CD4-positive, alpha-beta memory T cell (primary cell): ENCODE measurements at regions of chr17 and their contacts with region 1.

Region 1: DNA sequence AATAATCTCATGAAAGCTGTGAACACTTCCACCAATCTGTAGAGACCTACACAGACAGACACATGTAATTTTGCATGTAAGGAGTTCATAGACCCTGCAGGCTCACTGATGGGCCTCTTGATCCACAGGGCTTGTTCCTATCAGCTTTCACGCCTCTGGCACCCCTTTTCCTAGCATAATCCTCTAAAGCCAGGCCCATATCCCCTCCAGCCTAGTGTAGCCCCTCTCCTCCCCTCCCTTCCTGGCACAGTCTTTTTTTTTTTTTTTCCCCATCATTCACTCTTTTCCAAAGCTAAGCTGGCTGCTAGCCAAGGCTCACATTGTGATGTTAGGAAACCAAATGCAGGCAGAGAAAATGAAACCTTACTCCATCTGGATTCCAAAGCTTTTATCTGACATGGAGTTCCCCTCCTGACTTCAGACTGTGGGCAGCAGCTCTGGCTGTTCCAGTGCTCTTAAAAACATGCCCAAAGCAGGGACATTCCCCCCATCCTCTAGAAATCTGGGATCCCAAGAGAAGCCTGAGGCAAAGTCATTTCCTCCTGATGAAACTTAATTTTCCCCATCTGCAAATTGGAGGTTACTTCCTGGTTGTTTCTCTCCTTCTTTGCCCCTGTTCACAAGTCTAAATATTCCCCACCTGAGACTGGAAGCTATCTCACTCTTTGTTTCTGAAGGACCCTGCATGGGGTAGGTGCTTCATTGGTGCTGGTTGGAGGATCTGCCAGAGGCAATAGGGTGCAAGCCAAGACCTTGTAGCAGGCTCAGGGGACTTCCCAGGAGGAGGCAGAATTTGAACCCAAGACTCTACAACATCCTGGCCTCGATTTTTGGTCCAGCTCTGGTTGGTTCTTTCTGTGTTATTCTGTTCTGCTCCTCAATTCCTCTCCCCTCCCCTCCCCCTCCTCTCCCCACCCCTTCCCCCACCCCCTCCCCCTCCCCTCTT is 9.9 kb upstream of the CCL5 start:
- DNase-seq: peak in 1 of 5 donors; percentile 36
- H3K4me3 ChIP-seq: no peak overlapping the region
- H3K4me3 Mint-ChIP-seq: peak overlapping the region in 4 of 8 donors; percentile 31 to 70 (median 58)
- H3K27ac ChIP-seq: peak overlapping the region; percentile 19
- H3K27ac Mint-ChIP-seq: peak overlapping the region; percentile 75 to 95 (median 87)
- H3K4me1 ChIP-seq: peaks cover 52% of the 10 kb centered on the region
- H3K4me1 Mint-ChIP-seq: peaks cover 34 to 57% (median 48%) of the 10 kb centered on the region in 4 donors
- H3K27me3 ChIP-seq: no peaks in the 10 kb centered on the region
- H3K27me3 Mint-ChIP-seq: no peaks in the 10 kb centered on the region

Region 2: GRCh38 chr17:35870906-35871819 is 18.9 kb before region 1 on chr17:
- CTCF ChIA-PET with region 1: interaction called, 11 read pairs
- POLR2A ChIA-PET with region 1: interaction called, 141 read pairs
- intact Hi-C with region 1: no loop called
- DNase-seq: peak in 4 of 5 donors; percentile 26 to 49 (median 36)
- H3K4me3 ChIP-seq: no peak overlapping the region
- H3K4me3 Mint-ChIP-seq: peak overlapping the region in 1 of 8 donors; percentile 13
- H3K27ac ChIP-seq: no peak overlapping the region
- H3K27ac Mint-ChIP-seq: peak overlapping the region in 5 of 7 donors; percentile 6 to 55 (median 43)
- H3K4me1 ChIP-seq: peaks cover 15% of the 10 kb centered on the region
- H3K4me1 Mint-ChIP-seq: peaks cover 14 to 48% (median 30%) of the 10 kb centered on the region in 4 donors
- H3K27me3 ChIP-seq: no peaks in the 10 kb centered on the region
- H3K27me3 Mint-ChIP-seq: no peaks in the 10 kb centered on the region

Region 3: DNA sequence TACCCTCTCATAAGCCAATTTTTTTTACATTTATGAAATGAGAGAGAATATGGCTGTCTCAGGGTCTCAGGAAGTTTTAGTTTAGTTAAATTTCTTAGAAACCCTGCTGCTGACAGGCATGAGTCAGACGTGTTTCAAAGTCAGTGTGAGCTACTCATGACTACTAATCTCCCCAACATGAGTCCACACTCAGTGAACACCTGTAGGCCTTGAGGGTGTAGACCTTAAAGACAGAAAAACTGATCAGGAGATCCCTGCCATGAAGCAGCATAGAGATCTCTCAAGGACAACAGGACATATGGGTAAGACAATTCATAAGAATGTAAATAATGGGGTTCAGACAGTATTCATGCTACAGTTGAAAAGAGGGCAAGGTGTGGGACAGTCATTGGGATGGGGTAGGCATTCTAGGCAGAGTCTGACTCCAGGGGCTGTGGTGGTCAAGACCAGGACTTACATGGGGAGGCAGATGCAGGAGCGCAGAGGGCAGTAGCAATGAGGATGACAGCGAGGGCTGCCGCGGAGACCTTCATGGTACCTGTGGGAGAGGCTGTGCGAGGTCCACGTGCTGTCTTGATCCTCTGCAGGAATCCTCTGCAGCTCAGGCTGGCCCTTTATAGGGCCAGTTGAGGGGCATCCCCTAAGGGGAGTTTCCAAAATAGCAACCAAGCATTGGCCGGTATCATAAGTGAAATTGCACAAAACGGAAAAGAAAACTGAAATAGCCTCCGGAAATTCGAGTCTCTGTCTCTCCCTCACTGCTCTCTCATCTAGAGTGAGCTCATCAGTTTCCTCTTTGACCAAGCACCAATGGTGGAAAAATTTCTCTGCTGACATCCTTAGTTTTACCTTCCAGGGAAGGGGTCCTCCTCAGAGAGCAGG is 10.1 kb before region 1 on chr17 and contains the start of gene CCL5:
- CTCF ChIA-PET with region 1: interaction called, 10 read pairs
- POLR2A ChIA-PET with region 1: interaction called, 141 read pairs
- intact Hi-C with region 1: no loop called
- DNase-seq: peak; percentile 39 to 77 (median 47)
- H3K4me3 ChIP-seq: peak within 1 kb of the TSS in 1 of 2 donors; percentile 23
- H3K4me3 Mint-ChIP-seq: peak within 1 kb of the TSS; percentile 85 to 95 (median 90)
- H3K27ac ChIP-seq: peak within 1 kb of the TSS; percentile 61
- H3K27ac Mint-ChIP-seq: peak within 1 kb of the TSS; percentile 66 to 92 (median 88)
- H3K4me1 ChIP-seq: peaks cover 44% of the 10 kb centered on the region
- H3K4me1 Mint-ChIP-seq: peaks cover 15 to 57% (median 38%) of the 10 kb centered on the region in 4 donors
- H3K27me3 ChIP-seq: no peaks in the 10 kb centered on the region
- H3K27me3 Mint-ChIP-seq: no peaks in the 10 kb centered on the region
- total RNA-seq, gene CCL5: 279 to 309 TPM

Region 4: DNA sequence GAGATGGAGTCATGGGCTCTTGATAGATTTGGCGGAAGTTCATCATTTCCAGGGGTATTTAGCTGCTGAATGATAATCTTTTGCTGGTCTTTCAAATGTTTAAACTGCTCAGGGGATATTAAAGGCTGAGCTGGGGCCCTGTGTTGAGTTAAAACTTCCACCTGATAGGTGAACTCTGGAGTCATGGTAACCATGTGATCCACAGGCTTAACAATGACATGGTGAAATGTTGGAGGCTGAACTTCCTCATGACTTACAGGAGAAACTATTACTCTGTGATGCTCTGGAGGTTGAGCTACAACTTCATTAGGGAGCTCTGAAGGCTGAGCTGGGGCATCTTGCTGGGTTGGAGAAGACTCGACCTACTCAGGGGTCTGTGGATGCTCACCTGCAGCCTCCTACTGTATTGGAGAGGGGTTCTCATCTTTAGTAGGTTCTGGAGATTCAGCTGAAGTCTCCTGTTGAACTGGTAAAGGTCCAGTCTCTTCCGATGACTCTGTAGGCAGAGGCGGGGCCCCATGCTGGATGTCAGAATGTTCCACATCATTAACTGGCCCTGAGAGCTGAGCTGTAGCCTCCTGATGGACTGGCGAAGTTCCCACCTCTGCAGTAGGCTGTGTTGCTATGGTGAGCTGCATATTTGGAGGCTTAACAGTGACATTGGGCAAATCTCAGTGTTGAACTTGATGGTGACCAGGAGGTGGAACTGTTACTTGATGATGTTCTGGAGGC is 16.3 kb after region 1 on chr17:
- CTCF ChIA-PET with region 1: interaction called, 4 read pairs
- POLR2A ChIA-PET with region 1: interaction called, 62 read pairs
- intact Hi-C with region 1: no loop called
- DNase-seq: no peak
- H3K4me3 ChIP-seq: no peak overlapping the region
- H3K4me3 Mint-ChIP-seq: no peak overlapping the region
- H3K27ac ChIP-seq: no peak overlapping the region
- H3K27ac Mint-ChIP-seq: peak overlapping the region in 1 of 7 donors; percentile 11
- H3K4me1 ChIP-seq: no peaks in the 10 kb centered on the region
- H3K4me1 Mint-ChIP-seq: peaks cover 0 to 9% (median 6%) of the 10 kb centered on the region in 4 donors
- H3K27me3 ChIP-seq: no peaks in the 10 kb centered on the region
- H3K27me3 Mint-ChIP-seq: no peaks in the 10 kb centered on the region

Region 5: DNA sequence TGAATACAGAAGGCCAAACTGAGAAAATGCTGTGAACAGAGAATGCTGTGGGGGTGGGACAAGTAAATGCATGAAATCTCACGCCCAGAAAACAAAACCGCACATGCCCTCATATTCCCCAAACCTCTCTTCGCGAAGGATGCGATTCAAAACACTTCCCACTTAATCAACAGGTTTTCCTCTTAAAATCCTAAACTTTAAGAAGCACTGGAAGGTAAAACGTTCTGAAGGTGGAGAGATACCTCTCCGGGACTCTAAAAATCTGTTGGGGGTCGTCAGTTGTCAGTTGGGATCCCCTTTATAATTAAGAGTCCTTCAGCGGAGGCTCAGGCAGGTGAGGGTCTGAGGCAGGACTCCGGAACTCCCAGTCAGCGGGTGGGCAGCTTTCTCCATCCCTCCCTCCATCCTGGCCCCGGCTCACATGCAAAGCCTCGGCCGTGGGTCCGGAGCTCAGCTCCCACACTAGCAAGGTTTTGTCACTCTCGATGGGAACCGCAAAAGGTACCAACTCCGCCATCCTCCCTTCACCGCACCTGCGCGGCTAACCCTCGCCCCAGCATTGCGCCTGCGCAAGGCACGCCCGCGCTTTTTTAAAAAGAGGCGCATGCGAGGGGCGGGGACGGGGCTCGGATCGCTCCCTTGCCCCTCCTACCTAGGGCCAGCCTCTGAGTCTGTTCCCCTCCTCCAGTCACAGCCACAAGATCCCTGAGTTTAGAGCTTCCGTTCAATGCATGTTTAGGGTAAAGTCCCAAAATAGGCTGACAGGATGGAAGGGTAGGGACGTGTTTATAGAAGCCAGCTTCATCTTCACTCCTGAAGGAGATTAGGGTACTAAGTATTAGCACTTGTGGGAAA is 40.3 kb after region 1 on chr17 and contains the start of gene RDM1:
- CTCF ChIA-PET with region 1: no interaction called
- POLR2A ChIA-PET with region 1: interaction called, 13 read pairs
- intact Hi-C with region 1: no loop called
- DNase-seq: peak; percentile 72 to 78 (median 75)
- H3K4me3 ChIP-seq: peak within 1 kb of the TSS; percentile 59 to 71
- H3K4me3 Mint-ChIP-seq: peak within 1 kb of the TSS; percentile 80 to 86 (median 82)
- H3K27ac ChIP-seq: no peak within 1 kb of the TSS
- H3K27ac Mint-ChIP-seq: peak within 1 kb of the TSS; percentile 19 to 85 (median 80)
- H3K4me1 ChIP-seq: peaks cover 13% of the 10 kb centered on the region
- H3K4me1 Mint-ChIP-seq: peaks cover 7 to 20% (median 12%) of the 10 kb centered on the region in 4 donors
- H3K27me3 ChIP-seq: no peaks in the 10 kb centered on the region
- H3K27me3 Mint-ChIP-seq: no peaks in the 10 kb centered on the region
- total RNA-seq, gene RDM1: 0.87 to 1.9 TPM